ENCODE measurements at regions of chr15 and their contacts with region 1.

Region 1: DNA sequence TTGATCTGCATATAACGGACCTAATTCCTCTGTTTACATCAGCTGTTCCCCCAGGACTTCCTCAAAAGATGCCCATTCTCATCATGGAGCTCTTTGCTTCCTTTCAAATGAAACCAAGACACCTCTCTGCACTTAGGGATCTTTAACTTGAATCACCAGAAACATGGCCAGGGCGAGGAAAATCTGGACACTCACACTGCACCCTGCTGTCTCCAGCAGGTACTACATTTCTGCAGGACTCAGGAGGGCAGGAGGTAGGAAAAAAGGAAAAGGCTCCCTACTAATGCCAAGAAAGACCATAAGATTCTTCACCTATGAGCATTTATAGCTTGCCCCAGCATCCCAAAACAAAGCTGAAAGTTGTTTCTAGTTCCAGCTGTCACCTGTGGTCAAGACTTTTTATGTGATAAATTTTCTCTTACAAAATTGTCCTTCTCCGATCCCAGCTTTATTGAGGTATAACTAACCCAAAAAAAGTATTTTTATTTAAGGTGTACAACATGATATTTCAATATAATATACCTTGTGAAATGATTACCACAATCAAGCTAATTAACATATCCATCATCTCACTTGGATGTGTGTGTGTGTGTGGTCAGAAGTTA is 87.3 kb upstream of the C15orf61 start:
- DNase-seq: peak; percentile 54
- H3K4me3 Mint-ChIP-seq: no peak overlapping the region
- H3K27ac Mint-ChIP-seq: no peak overlapping the region
- H3K4me1 Mint-ChIP-seq: no peaks in the 10 kb centered on the region
- H3K27me3 Mint-ChIP-seq: no peaks in the 10 kb centered on the region
- CTCF ChIP-seq: peak; percentile 73

Region 2: DNA sequence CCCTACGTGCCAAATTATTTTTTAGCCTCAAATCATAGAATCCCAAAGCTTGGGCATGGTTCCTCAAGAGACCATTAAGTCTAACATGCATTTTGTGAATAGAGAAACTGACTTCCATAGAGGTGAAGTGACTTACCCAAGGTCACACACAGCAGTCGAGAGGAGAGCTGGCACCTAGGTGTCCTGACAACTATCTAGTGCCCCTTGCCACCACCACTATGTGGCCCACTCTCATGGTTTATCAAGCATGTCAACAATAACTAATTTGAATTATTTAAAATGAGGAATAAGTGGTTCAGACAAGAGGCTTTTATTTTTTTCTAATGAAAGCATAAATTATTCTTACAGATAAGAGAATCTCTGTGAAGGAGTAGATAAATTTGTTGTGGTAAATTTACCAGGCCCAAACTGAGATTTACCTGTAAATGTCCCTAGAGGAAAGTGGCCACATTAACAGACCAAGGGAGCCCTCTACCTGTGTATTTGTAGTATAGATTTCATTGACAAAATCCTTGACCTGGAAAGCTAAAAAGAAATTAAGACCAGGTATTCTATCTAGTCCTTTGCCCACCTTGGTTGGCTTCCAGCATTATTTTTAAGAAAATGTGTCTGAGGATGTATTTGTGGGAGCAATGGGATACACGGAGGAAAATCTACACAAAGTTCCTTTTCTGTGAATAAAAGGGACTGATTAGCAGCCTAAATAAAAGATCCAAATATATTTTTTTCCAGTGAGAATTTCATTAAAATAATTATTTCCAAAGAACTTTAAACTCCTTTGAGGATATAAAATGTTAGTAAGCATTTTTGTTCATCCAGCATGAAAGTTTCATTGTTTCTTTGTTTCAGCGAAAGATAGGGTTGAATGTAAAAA is 129.9 kb before region 1 on chr15:
- CTCF ChIA-PET with region 1: no interaction called
- POLR2A ChIA-PET with region 1: no interaction called
- intact Hi-C with region 1: loop called (anchors 5 kb)
- DNase-seq: peak; percentile 63
- H3K4me3 Mint-ChIP-seq: no peak overlapping the region
- H3K27ac Mint-ChIP-seq: no peak overlapping the region
- H3K4me1 Mint-ChIP-seq: no peaks in the 10 kb centered on the region
- H3K27me3 Mint-ChIP-seq: no peaks in the 10 kb centered on the region
- CTCF ChIP-seq: peak; percentile 66

Region 3: DNA sequence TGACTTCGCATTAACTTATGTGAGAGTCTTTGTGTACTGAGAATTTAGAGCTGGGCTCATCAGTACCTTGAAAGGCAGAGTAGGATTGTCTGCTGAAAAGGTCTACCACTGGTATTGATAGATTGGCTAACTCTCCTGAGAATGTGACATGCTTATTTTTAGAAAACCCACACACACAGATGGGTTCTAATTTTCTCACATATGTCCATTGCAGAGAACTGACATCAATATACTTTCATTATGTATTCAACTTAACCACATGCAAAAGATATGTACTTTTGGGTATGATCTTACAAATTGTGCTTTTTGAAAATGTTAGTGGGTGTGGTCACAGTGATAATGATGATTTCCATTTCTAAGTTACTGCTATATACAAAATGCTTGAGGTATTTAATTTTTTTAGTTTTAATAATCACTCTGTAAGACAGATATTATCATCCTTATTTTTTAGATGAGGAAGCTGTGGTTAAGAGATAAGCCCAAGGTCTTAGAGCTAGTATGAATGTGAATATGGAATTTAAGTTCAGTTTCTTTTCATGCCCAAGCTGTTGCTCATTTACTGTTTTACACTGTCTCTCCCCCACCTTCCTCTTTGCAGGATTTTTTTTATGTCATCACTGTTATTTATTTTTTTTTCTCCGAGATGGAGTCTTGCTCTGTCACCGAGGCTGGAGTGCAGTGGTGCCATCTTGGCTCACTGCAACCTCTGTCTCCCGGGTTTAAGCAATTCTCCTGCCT is 131.2 kb after region 1 on chr15:
- CTCF ChIA-PET with region 1: no interaction called
- POLR2A ChIA-PET with region 1: no interaction called
- intact Hi-C with region 1: no loop called
- DNase-seq: no peak
- H3K4me3 Mint-ChIP-seq: no peak overlapping the region
- H3K27ac Mint-ChIP-seq: no peak overlapping the region
- H3K4me1 Mint-ChIP-seq: no peaks in the 10 kb centered on the region
- H3K27me3 Mint-ChIP-seq: no peaks in the 10 kb centered on the region
- CTCF ChIP-seq: no peak